ENCODE measurements at regions of chr4 and their contacts with region 1.

Region 1: GRCh38 chr4:24980064-24980690 is 50.6 kb downstream of the LGI2 start:
- DNase-seq: peak; percentile 61
- ATAC-seq: peak; percentile 69
- H3K4me3 Mint-ChIP-seq: no peak overlapping the region
- H3K27ac Mint-ChIP-seq: no peak overlapping the region
- H3K4me1 Mint-ChIP-seq: peaks cover 9% of the 10 kb centered on the region
- H3K27me3 Mint-ChIP-seq: peaks cover 23% of the 10 kb centered on the region
- CTCF ChIP-seq: peak; percentile 85

Region 2: DNA sequence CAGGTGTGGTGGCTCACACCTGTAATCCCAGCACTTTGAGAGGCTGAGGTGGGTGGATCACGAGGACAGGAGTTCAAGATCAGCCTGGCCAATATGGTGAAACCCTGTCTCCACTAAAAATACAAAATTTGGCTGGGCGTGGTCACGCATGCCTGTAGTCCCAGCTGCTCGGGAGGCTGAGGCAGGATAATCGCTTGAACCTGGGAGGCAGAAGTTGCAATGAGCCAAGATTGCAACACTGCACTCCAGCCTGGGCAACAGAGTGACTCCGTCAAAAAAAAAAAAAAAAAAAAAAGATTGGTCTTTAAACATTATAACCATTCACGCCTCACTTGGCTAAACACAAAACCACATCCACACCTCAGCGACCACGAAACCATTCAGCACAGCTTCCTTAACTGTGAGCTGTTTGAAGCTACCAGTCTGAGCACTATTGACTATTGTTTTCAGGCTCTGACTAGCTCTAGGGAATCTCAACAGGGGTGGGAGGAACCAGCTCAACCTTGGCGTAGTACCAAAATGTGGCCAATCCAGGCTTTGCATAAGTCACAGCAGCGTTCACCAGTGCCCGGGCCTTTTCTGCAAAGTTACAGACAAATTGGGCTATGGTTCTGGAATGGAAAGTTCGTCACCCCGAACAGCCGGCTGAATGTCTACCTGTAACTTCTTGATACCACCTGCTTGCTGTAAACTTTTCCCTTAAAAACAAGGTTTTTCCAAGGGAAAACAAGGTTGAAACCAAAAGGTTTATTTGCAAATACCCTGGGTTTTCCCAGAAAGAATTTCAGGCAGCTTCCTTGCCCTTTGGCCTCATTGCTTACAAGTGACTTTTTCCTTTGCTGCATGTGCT is 322.2 kb before region 1 on chr4:
- CTCF ChIA-PET with region 1: no interaction called
- POLR2A ChIA-PET with region 1: no interaction called
- intact Hi-C with region 1: no loop called
- DNase-seq: peak; percentile 25
- ATAC-seq: no peak
- H3K4me3 Mint-ChIP-seq: no peak overlapping the region
- H3K27ac Mint-ChIP-seq: no peak overlapping the region
- H3K4me1 Mint-ChIP-seq: no peaks in the 10 kb centered on the region
- H3K27me3 Mint-ChIP-seq: peaks cover 10% of the 10 kb centered on the region
- CTCF ChIP-seq: no peak

Region 3: GRCh38 chr4:25013756-25014661 is 33.8 kb after region 1 on chr4:
- CTCF ChIA-PET with region 1: interaction called, 14 read pairs
- POLR2A ChIA-PET with region 1: no interaction called
- intact Hi-C with region 1: no loop called
- DNase-seq: no peak
- ATAC-seq: no peak
- H3K4me3 Mint-ChIP-seq: no peak overlapping the region
- H3K27ac Mint-ChIP-seq: no peak overlapping the region
- H3K4me1 Mint-ChIP-seq: no peaks in the 10 kb centered on the region
- H3K27me3 Mint-ChIP-seq: peaks cover 6% of the 10 kb centered on the region
- CTCF ChIP-seq: no peak

Region 4: DNA sequence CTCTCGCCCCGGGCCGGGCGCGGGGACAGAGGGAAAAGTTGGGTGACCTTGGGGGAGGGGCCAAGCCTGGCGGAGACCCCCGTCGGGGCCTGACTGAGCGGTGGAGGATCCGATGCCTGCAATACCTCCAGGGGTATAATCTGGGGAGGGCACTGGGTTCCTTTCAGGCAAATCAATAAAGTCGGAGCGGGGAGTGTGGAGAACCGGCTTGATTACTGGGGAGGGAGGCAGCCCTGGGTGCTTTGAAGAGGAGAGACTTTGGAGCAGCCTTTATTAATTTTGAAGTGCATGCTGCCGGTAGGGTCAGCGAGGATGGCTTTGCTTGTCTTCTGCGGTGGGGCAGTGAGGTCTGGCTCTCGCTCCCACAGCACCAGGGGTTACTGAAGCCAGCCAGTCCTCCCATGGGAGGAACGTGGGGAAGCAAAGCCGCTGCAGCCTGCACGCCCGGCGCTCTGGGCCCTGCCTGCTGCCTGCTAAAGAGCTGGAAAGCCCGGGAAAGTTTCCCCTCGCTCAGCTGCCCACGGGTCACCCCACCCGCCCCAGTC is 51.0 kb after region 1 on chr4:
- CTCF ChIA-PET with region 1: interaction called, 10 read pairs
- POLR2A ChIA-PET with region 1: no interaction called
- intact Hi-C with region 1: no loop called
- DNase-seq: no peak
- ATAC-seq: no peak
- H3K4me3 Mint-ChIP-seq: no peak overlapping the region
- H3K27ac Mint-ChIP-seq: no peak overlapping the region
- H3K4me1 Mint-ChIP-seq: peaks cover 3% of the 10 kb centered on the region
- H3K27me3 Mint-ChIP-seq: peaks cover 58% of the 10 kb centered on the region
- CTCF ChIP-seq: no peak

Region 5: GRCh38 chr4:25043548-25043947 is 63.4 kb after region 1 on chr4:
- CTCF ChIA-PET with region 1: interaction called, 14 read pairs
- POLR2A ChIA-PET with region 1: no interaction called
- intact Hi-C with region 1: no loop called
- DNase-seq: no peak
- ATAC-seq: no peak
- H3K4me3 Mint-ChIP-seq: no peak overlapping the region
- H3K27ac Mint-ChIP-seq: no peak overlapping the region
- H3K4me1 Mint-ChIP-seq: no peaks in the 10 kb centered on the region
- H3K27me3 Mint-ChIP-seq: peaks cover 9% of the 10 kb centered on the region
- CTCF ChIP-seq: no peak

Region 6: GRCh38 chr4:25144870-25145481 is 164.8 kb after region 1 on chr4:
- CTCF ChIA-PET with region 1: interaction called, 26 read pairs
- POLR2A ChIA-PET with region 1: no interaction called
- intact Hi-C with region 1: no loop called
- DNase-seq: no peak
- ATAC-seq: no peak
- H3K4me3 Mint-ChIP-seq: no peak overlapping the region
- H3K27ac Mint-ChIP-seq: no peak overlapping the region
- H3K4me1 Mint-ChIP-seq: no peaks in the 10 kb centered on the region
- H3K27me3 Mint-ChIP-seq: no peaks in the 10 kb centered on the region
- CTCF ChIP-seq: peak; percentile 62

Region 7: DNA sequence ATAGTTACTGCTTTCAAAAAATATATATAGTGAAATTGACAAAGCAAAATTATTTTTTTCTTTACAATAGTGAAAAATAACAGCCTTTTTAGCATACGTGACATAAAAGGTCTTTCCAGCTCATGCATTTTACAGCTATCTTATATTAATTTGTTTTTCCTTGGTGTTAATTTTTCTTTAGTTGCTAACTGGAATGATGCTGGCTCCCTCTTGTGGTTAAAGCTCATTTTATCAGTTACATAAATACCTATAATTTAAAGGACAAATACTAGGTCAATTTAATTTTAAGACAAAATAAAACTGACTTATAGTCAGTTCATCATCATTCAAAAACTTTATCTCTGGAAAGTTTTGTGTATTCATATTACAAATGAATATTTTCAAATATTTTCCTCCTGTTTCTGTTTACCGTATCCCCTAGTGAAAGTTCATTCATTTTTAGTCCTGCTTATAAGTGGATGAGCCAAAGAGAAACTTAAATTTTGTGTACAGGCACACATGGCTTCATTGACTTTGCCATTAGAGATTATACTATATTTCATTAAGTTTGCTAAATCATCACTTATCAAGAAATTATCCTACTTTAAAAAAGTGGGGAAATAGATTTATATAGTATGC is 386.9 kb after region 1 on chr4:
- CTCF ChIA-PET with region 1: interaction called, 30 read pairs
- POLR2A ChIA-PET with region 1: interaction called, 4 read pairs
- intact Hi-C with region 1: loop called (anchors 10 kb)
- DNase-seq: no peak
- ATAC-seq: no peak
- H3K4me3 Mint-ChIP-seq: no peak overlapping the region
- H3K27ac Mint-ChIP-seq: no peak overlapping the region
- H3K4me1 Mint-ChIP-seq: no peaks in the 10 kb centered on the region
- H3K27me3 Mint-ChIP-seq: no peaks in the 10 kb centered on the region
- CTCF ChIP-seq: peak; percentile 86

Region 8: DNA sequence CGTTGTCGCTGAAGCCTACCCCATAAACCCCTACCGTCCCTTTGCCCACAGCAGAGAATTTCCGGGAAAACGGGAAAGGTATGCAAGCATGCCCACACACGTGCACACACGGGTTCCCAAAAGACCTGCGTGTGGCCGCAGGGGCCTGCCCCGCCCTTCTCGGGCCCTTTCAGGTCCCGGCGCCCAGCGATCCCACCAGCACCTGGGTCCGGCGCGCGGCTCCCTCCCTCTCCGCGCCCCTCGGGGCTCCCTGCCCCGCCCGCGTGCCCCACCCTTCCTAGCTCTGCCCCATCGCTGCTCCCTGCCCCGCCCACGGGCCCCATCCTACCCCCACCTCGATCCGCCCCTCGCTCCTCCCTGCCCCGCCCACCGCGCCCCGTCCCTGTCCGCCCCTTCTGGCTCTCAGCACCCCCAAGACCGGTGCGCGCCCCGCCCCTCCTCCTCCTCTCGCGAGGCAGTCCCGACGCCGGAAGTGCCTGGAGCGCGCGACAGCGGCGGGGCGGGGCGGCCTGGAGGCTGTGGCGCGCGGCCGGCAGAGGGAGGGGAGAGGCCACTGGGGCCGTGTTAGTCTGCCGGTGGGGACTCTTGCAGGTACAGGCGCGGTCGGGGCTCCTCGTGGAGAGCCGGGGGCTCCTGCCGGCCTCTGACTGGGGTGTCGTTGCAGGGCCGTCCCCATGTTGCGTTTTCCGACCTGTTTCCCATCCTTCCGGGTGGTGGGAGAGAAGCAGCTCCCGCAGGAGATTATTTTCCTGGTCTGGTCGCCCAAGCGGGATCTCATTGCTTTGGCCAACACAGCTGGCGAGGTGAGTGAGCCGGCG is 396.8 kb after region 1 on chr4 and contains the start of gene ANAPC4:
- CTCF ChIA-PET with region 1: no interaction called
- POLR2A ChIA-PET with region 1: no interaction called
- intact Hi-C with region 1: loop called (anchors 10 kb)
- DNase-seq: peak; percentile 98
- ATAC-seq: peak; percentile 97
- H3K4me3 Mint-ChIP-seq: no peak within 1 kb of the TSS
- H3K27ac Mint-ChIP-seq: peak within 1 kb of the TSS; percentile 85
- H3K4me1 Mint-ChIP-seq: peaks cover 7% of the 10 kb centered on the region
- H3K27me3 Mint-ChIP-seq: no peaks in the 10 kb centered on the region
- CTCF ChIP-seq: no peak
- total RNA-seq, gene ANAPC4: 29.2 to 31.4 TPM